Heart left ventricle (tissue), 16 donors: ENCODE measurements at regions of chr3 and their contacts with region 1.

Region 1: GRCh38 chr3:98573181-98573728 is 20.2 kb downstream of the CPOX start:
- DNase-seq: no peak
- ATAC-seq: no peak
- H3K4me3 ChIP-seq: no peak overlapping the region
- H3K27ac ChIP-seq: no peak overlapping the region
- H3K4me1 ChIP-seq: no peaks in the 10 kb centered on the region
- H3K27me3 ChIP-seq: no peaks in the 10 kb centered on the region
- CTCF ChIP-seq: peak in 7 of 12 donors; percentile 9 to 40 (median 29)
- POLR2A ChIP-seq: no peak

Region 2: DNA sequence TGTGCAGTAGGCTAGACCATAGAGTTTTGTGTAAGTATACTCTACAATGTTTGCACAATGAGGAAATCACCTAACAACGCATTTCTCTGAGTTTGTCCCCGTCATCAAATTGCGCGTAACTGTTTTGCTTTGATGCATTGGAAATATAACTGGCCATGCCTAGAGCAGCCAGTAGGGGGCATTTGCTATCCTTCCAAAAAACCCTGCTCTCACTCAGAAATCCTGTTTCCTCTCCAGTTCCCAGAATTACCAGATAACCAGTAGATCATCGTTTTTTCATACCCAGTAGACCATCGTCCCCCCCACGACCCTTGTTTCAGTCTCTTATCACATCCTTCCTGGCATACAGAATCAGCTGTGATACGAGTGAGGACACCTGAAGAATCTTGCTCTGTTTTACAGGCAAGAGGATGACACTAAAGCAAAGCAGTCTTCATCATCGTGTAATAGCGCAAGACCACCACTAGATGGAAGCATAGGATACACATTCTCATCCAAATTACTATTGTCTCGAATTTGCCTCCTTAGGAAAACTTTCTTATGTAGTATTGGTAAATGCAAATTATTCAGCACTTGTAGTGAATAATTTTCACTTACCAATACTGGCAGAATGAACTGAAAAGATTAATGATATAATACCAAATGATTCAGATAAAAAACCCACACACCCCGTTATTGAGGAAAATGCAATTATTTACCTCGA is 533.8 kb before region 1 on chr3:
- intact Hi-C with region 1: loop called in 1 of 10 experiments (anchors 10 kb)
- DNase-seq: peak in 3 of 5 donors; percentile 13 to 31 (median 19)
- ATAC-seq: peak; percentile 58 to 94 (median 84)
- H3K4me3 ChIP-seq: peak overlapping the region in 9 of 12 donors; percentile 20 to 51 (median 36)
- H3K27ac ChIP-seq: no peak overlapping the region
- H3K4me1 ChIP-seq: peaks cover 0 to 6% (median 0%) of the 10 kb centered on the region in 12 donors
- H3K27me3 ChIP-seq: peaks cover 0 to 25% (median 0%) of the 10 kb centered on the region in 9 donors
- CTCF ChIP-seq: peak; percentile 74 to 94 (median 84)
- POLR2A ChIP-seq: no peak

Region 3: GRCh38 chr3:98058244-98058960 is 514.9 kb before region 1 on chr3:
- intact Hi-C with region 1: loop called in 1 of 10 experiments (anchors 10 kb)
- DNase-seq: no peak
- ATAC-seq: no peak
- H3K4me3 ChIP-seq: no peak overlapping the region
- H3K27ac ChIP-seq: no peak overlapping the region
- H3K4me1 ChIP-seq: no peaks in the 10 kb centered on the region
- H3K27me3 ChIP-seq: no peaks in the 10 kb centered on the region
- CTCF ChIP-seq: no peak
- POLR2A ChIP-seq: no peak

Region 4: GRCh38 chr3:98109807-98110549 is 463.3 kb before region 1 on chr3:
- intact Hi-C with region 1: loop called in 1 of 10 experiments (anchors 5 kb)
- DNase-seq: peak in 1 of 5 donors; percentile 36
- ATAC-seq: no peak
- H3K4me3 ChIP-seq: no peak overlapping the region
- H3K27ac ChIP-seq: no peak overlapping the region
- H3K4me1 ChIP-seq: no peaks in the 10 kb centered on the region
- H3K27me3 ChIP-seq: no peaks in the 10 kb centered on the region
- CTCF ChIP-seq: no peak
- POLR2A ChIP-seq: no peak